SK-N-SH (cell line): ENCODE measurements at regions of chr19 and their contacts with region 1.

Region 1: GRCh38 chr19:48970923-48971395 is 5.8 kb downstream of the FTL start:
- DNase-seq: peak; percentile 87
- H3K4me3 ChIP-seq: no peak overlapping the region; a peak in 1 of 4 replicates
- H3K27ac ChIP-seq: no peak overlapping the region
- H3K4me1 ChIP-seq: peaks cover 0 to 9% of the 10 kb centered on the region in 2 experiments; a peak in 2 of 4 replicates
- H3K27me3 ChIP-seq: no peaks in the 10 kb centered on the region
- CTCF ChIP-seq: peak; percentile 94
- EP300 ChIP-seq: no peak
- RAD21 ChIP-seq: peak; percentile 82

Region 2: DNA sequence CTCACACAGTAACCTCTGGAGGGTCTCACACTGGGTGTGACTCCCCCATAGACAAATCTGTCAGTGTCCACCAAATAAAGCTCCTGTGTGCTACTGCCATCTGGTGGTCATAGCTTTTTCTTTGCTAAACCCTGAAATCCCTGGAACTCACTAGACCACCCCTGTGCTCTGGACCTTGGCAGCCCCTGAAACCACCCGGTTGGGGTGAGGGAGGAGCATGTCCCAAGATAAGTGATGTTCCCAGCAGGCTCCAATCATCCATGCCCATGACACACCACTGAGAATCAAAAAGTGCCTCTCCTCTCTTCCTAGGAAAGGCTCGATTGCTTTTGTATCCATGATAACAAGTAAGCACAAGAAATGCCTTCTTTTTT is 128.2 kb before region 1 on chr19:
- CTCF ChIA-PET with region 1: interaction called, 42 read pairs
- POLR2A ChIA-PET with region 1: no interaction called
- DNase-seq: peak; percentile 80
- H3K4me3 ChIP-seq: no peak overlapping the region
- H3K27ac ChIP-seq: no peak overlapping the region
- H3K4me1 ChIP-seq: peaks cover 0 to 2% of the 10 kb centered on the region in 2 experiments; a peak in 1 of 4 replicates
- H3K27me3 ChIP-seq: no peaks in the 10 kb centered on the region
- CTCF ChIP-seq: peak; percentile 86
- EP300 ChIP-seq: no peak
- RAD21 ChIP-seq: peak; percentile 75

Region 3: DNA sequence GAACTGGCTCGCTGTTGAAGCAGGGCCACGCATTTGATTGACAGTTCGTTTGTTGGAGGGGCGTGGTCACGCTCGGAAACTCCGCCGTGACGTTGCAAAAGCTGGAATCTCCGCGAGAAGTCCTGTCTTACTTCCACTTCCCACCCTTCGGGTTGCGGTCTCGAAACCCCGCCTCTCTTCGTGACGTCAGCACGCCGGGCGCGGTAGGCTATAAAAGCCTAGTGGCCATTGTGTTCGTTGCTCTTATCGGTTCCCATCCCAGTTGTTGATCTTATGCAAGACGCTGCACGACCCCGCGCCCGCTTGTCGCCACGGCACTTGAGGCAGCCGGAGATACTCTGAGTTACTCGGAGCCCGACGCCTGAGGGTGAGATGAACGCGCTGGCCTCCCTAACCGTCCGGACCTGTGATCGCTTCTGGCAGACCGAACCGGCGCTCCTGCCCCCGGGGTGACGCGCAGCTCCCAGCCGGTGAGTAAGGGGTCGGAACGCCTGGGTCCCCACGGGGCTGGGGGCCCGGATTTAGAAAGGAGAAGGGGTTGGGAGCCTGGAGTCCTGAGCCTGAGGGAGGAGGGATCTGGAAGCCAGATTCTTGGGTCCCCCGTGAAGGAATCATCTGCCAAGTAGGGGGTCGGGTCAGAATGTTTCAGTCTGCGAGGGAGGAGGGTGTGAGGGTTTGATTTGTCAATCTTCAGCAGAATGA is 98.6 kb before region 1 on chr19 and contains the start of gene PPP1R15A:
- CTCF ChIA-PET with region 1: interaction called, 10 read pairs
- POLR2A ChIA-PET with region 1: no interaction called
- DNase-seq: peak; percentile 97
- H3K4me3 ChIP-seq: peak within 1 kb of the TSS; percentile 94 to 96
- H3K27ac ChIP-seq: peak within 1 kb of the TSS; percentile 92 to 100
- H3K4me1 ChIP-seq: peaks cover 15 to 41% of the 10 kb centered on the region in 2 experiments; a peak in 3 of 4 replicates
- H3K27me3 ChIP-seq: no peaks in the 10 kb centered on the region
- CTCF ChIP-seq: no peak
- EP300 ChIP-seq: no peak; a peak in 1 of 4 replicates
- RAD21 ChIP-seq: 0 out of 2 replicates have a peak, but pooled peaks have one; percentile 8
- polyA plus RNA-seq, gene PPP1R15A: 62.3 and 73.7 TPM in 2 replicates

Region 4: DNA sequence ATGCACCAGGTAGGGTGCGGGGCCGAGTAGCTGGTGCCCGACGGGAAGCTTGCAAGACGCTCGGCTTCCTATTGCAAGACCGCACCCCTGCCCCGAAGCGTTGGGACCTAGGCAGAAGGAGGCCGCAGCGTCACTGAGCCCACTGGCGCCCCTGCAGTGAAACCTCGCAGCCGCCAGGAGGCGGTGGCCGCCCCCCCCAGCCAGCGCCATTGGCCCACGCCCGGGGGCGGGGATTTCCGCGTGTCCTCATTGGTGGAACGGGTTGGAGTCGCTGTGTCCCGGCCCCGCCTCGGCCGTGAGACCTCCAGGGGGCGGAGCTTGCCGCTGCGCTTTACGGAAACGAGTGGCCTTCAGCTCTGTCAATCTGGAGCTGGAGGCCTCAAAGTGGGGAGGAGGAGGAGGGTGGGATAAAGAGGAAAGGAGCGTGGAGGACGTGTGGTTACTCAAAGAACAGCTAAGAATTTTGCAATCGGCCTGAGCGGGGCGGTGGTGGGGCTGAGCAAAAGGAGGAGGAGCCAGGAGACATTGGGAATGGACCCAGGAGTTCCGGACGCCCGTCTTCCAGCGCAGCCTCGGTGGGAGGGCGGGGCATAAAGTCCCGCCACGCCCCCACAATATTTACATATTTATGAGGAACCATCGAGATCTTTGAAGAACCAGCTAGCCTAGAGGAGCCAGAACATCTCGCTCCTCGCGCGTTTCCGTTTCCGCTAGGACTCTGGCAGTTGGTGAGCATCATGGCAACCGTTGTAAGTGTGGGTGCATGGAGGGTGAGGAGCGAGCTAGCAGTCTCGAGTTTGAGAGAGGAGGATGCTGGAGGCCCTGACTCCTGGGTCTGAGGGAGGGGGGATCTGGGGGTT is 22.4 kb after region 1 on chr19 and contains the starts of genes GYS1 and RUVBL2:
- CTCF ChIA-PET with region 1: interaction called, 54 read pairs
- POLR2A ChIA-PET with region 1: interaction called, 3 read pairs
- DNase-seq: peak; percentile 99
- H3K4me3 ChIP-seq: peak within 1 kb of the TSS; percentile 74 to 99
- H3K27ac ChIP-seq: peak within 1 kb of the TSS; percentile 82 to 86
- H3K4me1 ChIP-seq: peaks cover 0 to 17% of the 10 kb centered on the region in 2 experiments; a peak in 1 of 4 replicates
- H3K27me3 ChIP-seq: no peaks in the 10 kb centered on the region
- CTCF ChIP-seq: peak; percentile 81
- EP300 ChIP-seq: no peak; a peak in 1 of 4 replicates
- RAD21 ChIP-seq: no peak
- polyA plus RNA-seq, gene GYS1: 24.1 and 25.3 TPM in 2 replicates
- polyA plus RNA-seq, gene RUVBL2: 411 and 459 TPM in 2 replicates

Region 5: GRCh38 chr19:49042177-49042576 is 71.2 kb after region 1 on chr19:
- CTCF ChIA-PET with region 1: no interaction called
- POLR2A ChIA-PET with region 1: no interaction called
- DNase-seq: no peak
- H3K4me3 ChIP-seq: no peak overlapping the region
- H3K27ac ChIP-seq: no peak overlapping the region; a peak in 1 of 4 replicates
- H3K4me1 ChIP-seq: no peaks in the 10 kb centered on the region
- H3K27me3 ChIP-seq: no peaks in the 10 kb centered on the region
- CTCF ChIP-seq: no peak
- EP300 ChIP-seq: no peak
- RAD21 ChIP-seq: no peak

Region 6: DNA sequence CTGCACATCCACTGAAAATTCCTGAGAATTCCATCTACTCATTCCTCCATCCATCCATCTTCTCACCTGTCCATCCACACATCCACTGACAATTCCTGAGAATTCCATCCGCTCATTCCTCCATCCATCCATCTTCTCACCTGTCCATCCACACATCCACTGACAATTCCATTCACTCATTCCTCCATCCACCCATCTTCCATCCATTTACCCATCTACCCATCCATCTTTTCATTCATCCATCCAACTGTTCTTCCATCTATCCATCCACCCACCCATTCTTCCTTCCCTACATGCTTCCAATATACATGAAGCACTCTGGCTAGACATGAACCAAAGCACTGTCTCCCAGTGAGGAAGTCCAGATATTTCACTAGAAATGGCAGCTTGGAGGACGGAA is 202.2 kb after region 1 on chr19:
- CTCF ChIA-PET with region 1: no interaction called
- POLR2A ChIA-PET with region 1: no interaction called
- DNase-seq: no peak
- H3K4me3 ChIP-seq: no peak overlapping the region
- H3K27ac ChIP-seq: no peak overlapping the region
- H3K4me1 ChIP-seq: no peaks in the 10 kb centered on the region
- H3K27me3 ChIP-seq: no peaks in the 10 kb centered on the region
- CTCF ChIP-seq: no peak
- EP300 ChIP-seq: no peak
- RAD21 ChIP-seq: no peak